ENCODE measurements at regions of chr3 and their contacts with region 1.

Region 1: DNA sequence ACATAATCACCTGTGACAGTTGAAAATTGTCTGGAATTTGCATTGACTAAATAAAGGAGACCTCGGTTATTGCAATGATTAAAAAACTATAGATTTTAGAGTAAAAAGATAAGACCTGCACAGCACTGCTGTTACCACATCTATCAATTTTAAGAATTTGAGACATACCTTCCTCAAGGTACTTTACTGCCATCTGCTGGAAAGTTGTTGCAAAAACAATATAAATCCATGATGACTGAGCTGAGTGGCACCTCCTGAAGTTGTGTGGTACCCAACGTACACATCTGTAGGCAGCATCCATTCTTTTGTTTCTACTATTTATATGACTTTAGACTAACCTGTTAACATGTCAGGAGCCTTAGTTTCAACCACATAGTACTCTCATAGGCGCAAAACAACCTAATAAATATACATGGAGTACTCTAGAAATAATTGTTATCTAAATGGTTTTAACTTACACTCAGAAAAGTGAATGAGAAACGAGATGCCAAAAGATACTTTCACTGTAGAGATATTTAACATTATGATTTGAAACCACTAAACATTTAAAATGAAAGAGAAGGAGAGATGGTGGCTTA is 106.7 kb downstream of the GHSR start:
- DNase-seq: peak; percentile 62
- ATAC-seq: peak; percentile 54
- H3K4me3 ChIP-seq: no peak overlapping the region
- H3K4me3 Mint-ChIP-seq: no peak overlapping the region
- H3K27ac ChIP-seq: no peak overlapping the region
- H3K27ac Mint-ChIP-seq: no peak overlapping the region
- H3K4me1 ChIP-seq: no peaks in the 10 kb centered on the region
- H3K4me1 Mint-ChIP-seq: no peaks in the 10 kb centered on the region
- H3K27me3 ChIP-seq: no peaks in the 10 kb centered on the region
- H3K27me3 Mint-ChIP-seq: no peaks in the 10 kb centered on the region
- CTCF ChIP-seq: peak; percentile 92

Region 2: GRCh38 chr3:171049861-171050444 is 1291.6 kb before region 1 on chr3:
- CTCF ChIA-PET with region 1: interaction called, 3 read pairs
- POLR2A ChIA-PET with region 1: no interaction called
- intact Hi-C with region 1: loop called (anchors 2 kb)
- DNase-seq: peak; percentile 38
- ATAC-seq: peak; percentile 53
- H3K4me3 ChIP-seq: no peak overlapping the region
- H3K4me3 Mint-ChIP-seq: no peak overlapping the region
- H3K27ac ChIP-seq: no peak overlapping the region
- H3K27ac Mint-ChIP-seq: no peak overlapping the region
- H3K4me1 ChIP-seq: no peaks in the 10 kb centered on the region
- H3K4me1 Mint-ChIP-seq: no peaks in the 10 kb centered on the region
- H3K27me3 ChIP-seq: no peaks in the 10 kb centered on the region
- H3K27me3 Mint-ChIP-seq: peaks cover 11% of the 10 kb centered on the region
- CTCF ChIP-seq: peak; percentile 59

Region 3: GRCh38 chr3:171614318-171614921 is 727.2 kb before region 1 on chr3:
- CTCF ChIA-PET with region 1: interaction called, 3 read pairs
- POLR2A ChIA-PET with region 1: no interaction called
- intact Hi-C with region 1: loop called (anchors 10 kb)
- DNase-seq: no peak
- ATAC-seq: no peak
- H3K4me3 ChIP-seq: no peak overlapping the region
- H3K4me3 Mint-ChIP-seq: no peak overlapping the region
- H3K27ac ChIP-seq: no peak overlapping the region
- H3K27ac Mint-ChIP-seq: no peak overlapping the region
- H3K4me1 ChIP-seq: no peaks in the 10 kb centered on the region
- H3K4me1 Mint-ChIP-seq: no peaks in the 10 kb centered on the region
- H3K27me3 ChIP-seq: no peaks in the 10 kb centered on the region
- H3K27me3 Mint-ChIP-seq: peaks cover 11% of the 10 kb centered on the region
- CTCF ChIP-seq: no peak

Region 4: DNA sequence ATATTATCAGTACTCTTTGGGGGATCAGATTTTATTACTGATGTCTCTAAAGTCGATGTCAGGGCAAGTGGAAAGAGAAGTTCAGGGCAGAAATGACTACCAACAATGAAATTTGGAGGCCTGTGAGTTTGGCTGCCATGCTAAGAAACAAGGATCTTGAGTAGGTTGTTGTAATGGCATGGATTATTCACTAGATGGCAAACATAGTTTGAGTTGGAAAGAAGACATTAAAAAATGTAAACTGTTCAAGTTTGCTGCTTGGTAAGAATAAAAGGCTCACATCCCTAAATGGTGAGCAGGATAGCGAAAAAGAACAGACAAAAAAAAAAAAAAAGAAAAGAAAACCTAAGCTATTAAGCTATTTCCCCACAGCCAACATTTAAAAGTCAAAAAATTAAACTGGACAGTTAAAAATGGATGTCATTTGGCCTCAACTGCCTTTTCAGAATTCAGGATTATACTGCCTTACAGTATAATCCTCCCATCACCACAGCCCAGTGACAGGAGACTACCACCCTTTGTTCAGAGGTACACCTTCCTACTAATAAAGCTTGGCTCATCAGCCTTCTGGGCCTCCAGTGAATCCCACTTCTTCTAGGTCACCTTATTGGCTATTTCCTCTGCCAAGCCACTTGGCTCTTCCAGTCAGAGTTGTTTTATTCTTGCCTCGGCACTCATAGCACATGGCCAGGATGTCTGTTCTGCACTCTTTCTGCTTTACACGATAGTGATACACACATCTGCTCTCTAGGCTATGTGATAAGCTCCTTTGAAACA is 695.0 kb before region 1 on chr3:
- CTCF ChIA-PET with region 1: interaction called, 6 read pairs
- POLR2A ChIA-PET with region 1: no interaction called
- intact Hi-C with region 1: loop called (anchors 2 kb)
- DNase-seq: no peak
- ATAC-seq: no peak
- H3K4me3 ChIP-seq: no peak overlapping the region
- H3K4me3 Mint-ChIP-seq: no peak overlapping the region
- H3K27ac ChIP-seq: no peak overlapping the region
- H3K27ac Mint-ChIP-seq: no peak overlapping the region
- H3K4me1 ChIP-seq: no peaks in the 10 kb centered on the region
- H3K4me1 Mint-ChIP-seq: no peaks in the 10 kb centered on the region
- H3K27me3 ChIP-seq: no peaks in the 10 kb centered on the region
- H3K27me3 Mint-ChIP-seq: peaks cover 11% of the 10 kb centered on the region
- CTCF ChIP-seq: peak; percentile 42

Region 5: GRCh38 chr3:172354931-172355499 is 13.4 kb after region 1 on chr3:
- CTCF ChIA-PET with region 1: interaction called, 14 read pairs
- POLR2A ChIA-PET with region 1: no interaction called
- intact Hi-C with region 1: no loop called
- DNase-seq: no peak
- ATAC-seq: no peak
- H3K4me3 ChIP-seq: no peak overlapping the region
- H3K4me3 Mint-ChIP-seq: no peak overlapping the region
- H3K27ac ChIP-seq: no peak overlapping the region
- H3K27ac Mint-ChIP-seq: no peak overlapping the region
- H3K4me1 ChIP-seq: no peaks in the 10 kb centered on the region
- H3K4me1 Mint-ChIP-seq: no peaks in the 10 kb centered on the region
- H3K27me3 ChIP-seq: no peaks in the 10 kb centered on the region
- H3K27me3 Mint-ChIP-seq: no peaks in the 10 kb centered on the region
- CTCF ChIP-seq: no peak

Region 6: GRCh38 chr3:172376881-172377280 is 35.3 kb after region 1 on chr3:
- CTCF ChIA-PET with region 1: no interaction called
- POLR2A ChIA-PET with region 1: no interaction called
- intact Hi-C with region 1: no loop called
- DNase-seq: no peak
- ATAC-seq: no peak
- H3K4me3 ChIP-seq: no peak overlapping the region
- H3K4me3 Mint-ChIP-seq: no peak overlapping the region
- H3K27ac ChIP-seq: no peak overlapping the region
- H3K27ac Mint-ChIP-seq: no peak overlapping the region
- H3K4me1 ChIP-seq: no peaks in the 10 kb centered on the region
- H3K4me1 Mint-ChIP-seq: no peaks in the 10 kb centered on the region
- H3K27me3 ChIP-seq: no peaks in the 10 kb centered on the region
- H3K27me3 Mint-ChIP-seq: no peaks in the 10 kb centered on the region
- CTCF ChIP-seq: no peak

Measured in B cell (primary cell).